Left ventricle myocardium inferior (tissue), 1 donor: ENCODE measurements at regions of chr6 and their contacts with region 1.

Region 1: DNA sequence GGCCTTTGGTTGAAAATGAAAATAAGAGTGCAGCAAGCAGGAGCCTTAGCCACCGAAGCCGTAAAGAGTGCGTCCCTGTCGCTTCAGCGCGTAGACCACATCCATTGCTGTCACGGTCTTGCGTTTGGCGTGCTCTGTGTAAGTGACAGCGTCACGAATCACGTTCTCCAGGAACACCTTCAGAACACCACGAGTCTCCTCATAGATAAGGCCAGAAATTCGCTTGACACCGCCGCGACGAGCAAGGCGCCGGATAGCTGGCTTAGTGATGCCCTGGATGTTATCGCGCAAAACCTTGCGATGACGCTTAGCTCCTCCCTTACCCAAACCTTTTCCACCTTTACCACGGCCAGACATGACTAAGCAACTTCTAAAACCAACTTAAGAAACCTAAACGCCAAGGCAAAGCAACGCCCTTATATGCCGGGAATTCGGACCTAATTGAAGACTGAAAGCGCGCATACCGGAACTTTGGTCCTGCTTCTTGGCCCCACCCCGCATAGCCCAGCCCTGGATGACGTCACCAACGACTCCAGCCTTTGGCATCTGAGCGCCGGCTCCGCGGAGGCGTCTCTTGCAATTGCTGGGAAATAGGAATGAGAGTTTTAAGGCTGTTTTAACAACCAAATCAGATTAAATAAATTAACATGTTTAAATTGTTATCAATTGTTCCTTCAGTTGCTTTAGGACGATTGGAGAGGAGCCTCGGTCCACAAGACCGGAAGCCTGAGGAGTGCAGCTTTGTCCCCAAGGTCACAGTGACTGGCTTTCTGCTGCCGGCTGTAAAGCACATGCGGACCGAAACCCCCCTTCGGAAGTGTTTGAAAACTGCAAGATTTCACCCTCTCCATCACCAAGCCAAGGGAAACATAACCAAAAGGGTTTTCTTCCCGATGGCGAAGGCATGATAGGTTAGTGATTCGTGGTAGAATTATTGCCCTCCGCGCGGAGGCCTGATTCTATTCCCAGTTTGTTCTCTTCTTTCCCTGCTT is 79.6 kb upstream of the BTN3A2 start:
- DNase-seq: peak; percentile 95
- H3K4me3 ChIP-seq: peak overlapping the region; percentile 73
- H3K27ac ChIP-seq: peak overlapping the region; percentile 95
- H3K4me1 ChIP-seq: peaks cover 34% of the 10 kb centered on the region
- H3K27me3 ChIP-seq: no peaks in the 10 kb centered on the region
- CTCF ChIP-seq: no peak

Region 2: GRCh38 chr6:26175428-26176181 is 109.8 kb before region 1 on chr6:
- intact Hi-C with region 1: no loop called
- DNase-seq: no peak
- H3K4me3 ChIP-seq: no peak overlapping the region
- H3K27ac ChIP-seq: no peak overlapping the region
- H3K4me1 ChIP-seq: peaks cover 30% of the 10 kb centered on the region
- H3K27me3 ChIP-seq: no peaks in the 10 kb centered on the region
- CTCF ChIP-seq: peak; percentile 73

Region 3: GRCh38 chr6:26223650-26224546 is 61.5 kb before region 1 on chr6:
- intact Hi-C with region 1: loop called (anchors 10 kb)
- DNase-seq: peak; percentile 50
- H3K4me3 ChIP-seq: peak overlapping the region; percentile 68
- H3K27ac ChIP-seq: peak overlapping the region; percentile 91
- H3K4me1 ChIP-seq: peaks cover 23% of the 10 kb centered on the region
- H3K27me3 ChIP-seq: peaks cover 72% of the 10 kb centered on the region
- CTCF ChIP-seq: no peak